ENCODE measurements at regions of chr2 and their contacts with region 1.

Region 1: GRCh38 chr2:171102802-171103201 is 57.9 kb downstream of the TLK1 start:
- DNase-seq: no peak
- ATAC-seq: no peak
- H3K4me3 Mint-ChIP-seq: no peak overlapping the region
- H3K27ac Mint-ChIP-seq: peak overlapping the region; percentile 42
- H3K4me1 Mint-ChIP-seq: peaks cover 38% of the 10 kb centered on the region
- H3K27me3 Mint-ChIP-seq: no peaks in the 10 kb centered on the region
- CTCF ChIP-seq: no peak

Region 2: DNA sequence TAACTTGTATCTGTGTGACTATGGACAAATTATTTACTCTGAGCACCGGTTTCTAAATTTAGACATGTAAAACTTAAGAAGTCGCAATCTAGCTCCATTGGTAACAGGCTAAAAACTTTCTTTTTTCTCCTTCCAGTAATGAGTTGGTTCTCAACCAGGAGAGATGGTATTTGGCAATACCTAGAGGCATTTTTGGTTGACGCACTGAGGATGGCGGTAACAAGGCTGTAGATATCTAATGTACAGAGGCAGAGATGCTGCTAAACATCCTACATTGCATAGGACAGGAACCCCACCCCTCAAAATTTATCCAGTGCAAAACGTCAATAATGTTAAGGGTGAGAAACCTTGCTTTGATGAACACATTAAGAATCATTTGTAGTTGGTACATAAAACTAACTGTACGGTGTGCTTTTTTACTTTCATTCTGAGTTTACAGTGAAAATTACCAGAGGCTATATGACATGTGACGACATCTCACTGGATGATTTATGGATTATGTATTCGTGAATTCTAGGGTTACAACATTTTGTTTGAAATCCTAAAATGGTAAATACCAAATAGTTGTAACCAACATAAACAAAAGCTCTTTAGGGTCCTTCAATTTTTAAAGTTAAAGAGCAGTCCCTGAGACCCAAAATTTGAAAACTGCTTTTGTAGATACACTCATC is 33.4 kb before region 1 on chr2:
- CTCF ChIA-PET with region 1: no interaction called
- POLR2A ChIA-PET with region 1: no interaction called
- intact Hi-C with region 1: loop called (anchors 5 kb)
- DNase-seq: no peak
- ATAC-seq: no peak
- H3K4me3 Mint-ChIP-seq: no peak overlapping the region
- H3K27ac Mint-ChIP-seq: no peak overlapping the region
- H3K4me1 Mint-ChIP-seq: no peaks in the 10 kb centered on the region
- H3K27me3 Mint-ChIP-seq: no peaks in the 10 kb centered on the region
- CTCF ChIP-seq: no peak

Region 3: GRCh38 chr2:171086352-171087290 is 16.2 kb before region 1 on chr2:
- CTCF ChIA-PET with region 1: interaction called, 10 read pairs
- POLR2A ChIA-PET with region 1: no interaction called
- intact Hi-C with region 1: no loop called
- DNase-seq: no peak
- ATAC-seq: peak; percentile 57
- H3K4me3 Mint-ChIP-seq: no peak overlapping the region
- H3K27ac Mint-ChIP-seq: peak overlapping the region; percentile 7
- H3K4me1 Mint-ChIP-seq: peaks cover 36% of the 10 kb centered on the region
- H3K27me3 Mint-ChIP-seq: no peaks in the 10 kb centered on the region
- CTCF ChIP-seq: peak; percentile 67

Region 4: DNA sequence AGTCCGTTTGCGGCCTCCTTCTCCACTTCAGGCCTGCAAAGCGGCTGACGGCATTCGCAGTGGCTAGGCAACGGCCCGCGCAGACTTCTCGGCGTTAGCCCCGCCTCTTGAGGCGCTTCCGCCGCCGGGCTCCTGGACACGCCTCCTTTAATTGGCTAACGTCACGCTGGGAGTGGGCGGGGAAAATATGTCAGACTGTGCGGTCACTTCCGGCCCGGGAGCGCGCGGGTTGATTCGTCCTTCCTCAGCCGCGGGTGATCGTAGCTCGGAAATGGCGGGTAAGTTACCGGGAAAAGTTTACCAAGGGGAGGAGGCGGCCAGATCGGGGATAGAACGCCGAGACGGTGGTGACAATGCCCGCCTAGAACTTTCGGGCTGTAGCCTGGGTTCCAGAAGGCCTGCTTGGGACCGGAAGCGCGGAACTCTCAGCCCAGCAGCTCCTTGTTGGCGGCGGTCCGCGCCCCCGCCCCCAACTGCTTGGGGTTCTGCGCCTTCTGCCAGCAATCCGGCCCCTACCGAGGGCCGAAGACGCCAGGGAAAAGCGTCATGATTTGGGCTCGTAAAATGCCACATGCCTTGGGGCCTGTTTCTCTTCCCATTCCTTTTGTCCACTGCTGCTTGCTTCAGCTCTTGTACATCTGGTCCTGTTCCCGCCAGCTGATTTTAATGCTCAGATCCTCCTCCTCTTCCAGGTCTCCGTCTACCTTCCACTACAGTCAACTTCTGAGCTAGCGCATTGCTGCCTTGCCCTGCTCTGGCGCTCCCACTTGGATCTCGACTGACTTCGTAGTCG is 819.6 kb after region 1 on chr2 and contains the start of gene HAT1:
- CTCF ChIA-PET with region 1: no interaction called
- POLR2A ChIA-PET with region 1: no interaction called
- intact Hi-C with region 1: no loop called
- DNase-seq: peak; percentile 94
- ATAC-seq: peak; percentile 97
- H3K4me3 Mint-ChIP-seq: peak within 1 kb of the TSS; percentile 100
- H3K27ac Mint-ChIP-seq: peak within 1 kb of the TSS; percentile 99
- H3K4me1 Mint-ChIP-seq: peaks cover 33% of the 10 kb centered on the region
- H3K27me3 Mint-ChIP-seq: no peaks in the 10 kb centered on the region
- CTCF ChIP-seq: no peak
- total RNA-seq, gene HAT1: 35.9 and 36.2 TPM in 2 replicates

Measured in activated B cell treated with CpG ODN at 0.5 μM for 24 hours (primary cell).